OCI-LY7 (cell line): ENCODE measurements at regions of chr6 and their contacts with region 1.

Region 1: GRCh38 chr6:41683510-41684310 is 45.4 kb downstream of the MDFI start:
- DNase-seq: peak; percentile 81
- H3K4me3 ChIP-seq: no peak overlapping the region
- H3K27ac ChIP-seq: no peak overlapping the region
- H3K4me1 ChIP-seq: peaks cover 16% of the 10 kb centered on the region
- CTCF ChIP-seq: peak; percentile 85

Region 2: DNA sequence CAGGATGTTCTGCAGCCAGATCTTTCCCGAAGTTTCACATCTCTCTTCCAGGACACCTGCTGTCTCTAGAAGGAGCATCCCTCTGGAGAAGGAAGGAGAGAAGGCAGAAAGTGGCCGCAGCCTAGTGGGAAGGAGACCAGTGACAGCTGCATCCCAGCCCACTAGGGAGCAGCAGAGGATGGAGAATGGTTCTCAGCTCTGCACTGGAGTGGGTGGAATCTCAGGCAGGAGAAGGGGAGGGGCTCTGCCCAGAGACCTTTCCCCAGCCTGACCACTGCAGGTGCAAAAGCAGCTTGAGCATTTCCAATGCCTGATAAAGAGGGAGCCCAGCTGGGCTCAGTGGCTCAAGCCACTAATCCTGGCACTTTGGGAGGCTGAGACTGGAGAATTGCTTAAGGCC is 316.0 kb before region 1 on chr6:
- CTCF ChIA-PET with region 1: no interaction called
- POLR2A ChIA-PET with region 1: no interaction called
- intact Hi-C with region 1: loop called (anchors 2 kb)
- DNase-seq: peak; percentile 18
- H3K4me3 ChIP-seq: no peak overlapping the region
- H3K27ac ChIP-seq: no peak overlapping the region
- H3K4me1 ChIP-seq: no peaks in the 10 kb centered on the region
- CTCF ChIP-seq: peak; percentile 66

Region 3: GRCh38 chr6:41463062-41463930 is 220.4 kb before region 1 on chr6:
- CTCF ChIA-PET with region 1: no interaction called
- POLR2A ChIA-PET with region 1: no interaction called
- intact Hi-C with region 1: loop called (anchors 5 kb)
- DNase-seq: peak; percentile 42
- H3K4me3 ChIP-seq: no peak overlapping the region
- H3K27ac ChIP-seq: no peak overlapping the region
- H3K4me1 ChIP-seq: no peaks in the 10 kb centered on the region
- CTCF ChIP-seq: peak; percentile 78

Region 4: GRCh38 chr6:41602864-41603608 is 80.7 kb before region 1 on chr6:
- CTCF ChIA-PET with region 1: interaction called, 6 read pairs
- POLR2A ChIA-PET with region 1: interaction called, 3 read pairs
- intact Hi-C with region 1: loop called (anchors 1 kb)
- DNase-seq: peak; percentile 89
- H3K4me3 ChIP-seq: peak overlapping the region; percentile 47
- H3K27ac ChIP-seq: no peak overlapping the region
- H3K4me1 ChIP-seq: peaks cover 9% of the 10 kb centered on the region
- CTCF ChIP-seq: peak; percentile 99